ENCODE measurements at regions of chr1 and their contacts with region 1.

Region 1: GRCh38 chr1:211469938-211470529 is 21.9 kb downstream of the RD3 start:
- DNase-seq: peak; percentile 83
- ATAC-seq: peak; percentile 98 to 100
- H3K4me3 ChIP-seq: no peak overlapping the region
- H3K27ac ChIP-seq: 0 out of 6 replicates have a peak overlapping the region, but pooled peaks of 1 of the 2 experiments have one; percentile 4
- H3K4me1 ChIP-seq: 0 out of 3 replicates have a peak, but pooled peaks cover 7% of the 10 kb centered on the region
- CTCF ChIP-seq: peak; percentile 83
- EP300 ChIP-seq: no peak
- POLR2A ChIP-seq: no peak
- RAD21 ChIP-seq: peak; percentile 62 to 64

Region 2: GRCh38 chr1:211323156-211324063 is 146.6 kb before region 1 on chr1:
- CTCF ChIA-PET with region 1: interaction called, 12 read pairs
- POLR2A ChIA-PET with region 1: no interaction called
- DNase-seq: peak; percentile 66 to 72
- ATAC-seq: peak; percentile 80 to 87
- H3K4me3 ChIP-seq: no peak overlapping the region
- H3K27ac ChIP-seq: no peak overlapping the region
- H3K4me1 ChIP-seq: peaks cover 11% of the 10 kb centered on the region
- CTCF ChIP-seq: peak; percentile 92
- EP300 ChIP-seq: no peak
- POLR2A ChIP-seq: no peak
- RAD21 ChIP-seq: peak; percentile 82 to 90

Region 3: DNA sequence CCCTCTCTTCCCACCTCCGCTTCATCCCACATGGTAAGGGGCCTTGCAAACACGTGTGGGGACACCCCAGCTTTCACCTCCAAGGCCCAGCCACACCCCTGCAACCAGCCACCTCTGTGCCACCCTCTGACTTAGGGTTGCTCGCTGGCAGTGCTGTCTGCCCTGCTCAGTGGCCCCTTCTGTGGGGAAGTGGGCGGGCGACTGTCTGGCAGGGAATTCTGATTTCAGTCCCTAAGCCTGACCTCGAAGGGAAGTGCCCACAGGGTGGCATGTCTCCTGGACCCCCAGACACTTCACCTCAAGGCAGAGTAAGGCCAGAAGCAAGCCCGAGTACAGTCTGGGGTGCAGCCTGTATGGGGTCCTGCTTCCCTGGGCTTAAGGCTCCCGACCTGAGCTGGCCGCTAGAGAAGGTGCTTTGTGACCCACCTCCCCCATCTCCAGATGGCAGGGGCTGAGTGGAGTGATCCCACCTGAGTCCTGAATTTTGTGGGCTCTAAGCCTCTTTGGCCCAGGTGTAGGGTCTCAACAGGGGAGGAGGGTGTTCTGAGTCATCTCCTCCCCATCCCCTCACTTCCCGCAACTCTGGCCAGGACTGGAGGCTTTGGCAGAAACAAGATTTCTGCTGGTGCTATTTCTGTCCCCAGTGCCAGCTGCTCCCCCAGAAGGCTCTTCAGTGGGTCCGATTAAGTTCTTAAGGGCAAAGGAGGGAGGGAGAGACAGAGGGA is 14.9 kb after region 1 on chr1:
- CTCF ChIA-PET with region 1: interaction called, 63 read pairs
- POLR2A ChIA-PET with region 1: no interaction called
- DNase-seq: no peak
- ATAC-seq: peak in 1 of 2 experiments; percentile 21; a peak in 2 of 6 replicates
- H3K4me3 ChIP-seq: no peak overlapping the region
- H3K27ac ChIP-seq: no peak overlapping the region
- H3K4me1 ChIP-seq: no peaks in the 10 kb centered on the region
- CTCF ChIP-seq: no peak
- EP300 ChIP-seq: no peak
- POLR2A ChIP-seq: no peak
- RAD21 ChIP-seq: no peak

Region 4: DNA sequence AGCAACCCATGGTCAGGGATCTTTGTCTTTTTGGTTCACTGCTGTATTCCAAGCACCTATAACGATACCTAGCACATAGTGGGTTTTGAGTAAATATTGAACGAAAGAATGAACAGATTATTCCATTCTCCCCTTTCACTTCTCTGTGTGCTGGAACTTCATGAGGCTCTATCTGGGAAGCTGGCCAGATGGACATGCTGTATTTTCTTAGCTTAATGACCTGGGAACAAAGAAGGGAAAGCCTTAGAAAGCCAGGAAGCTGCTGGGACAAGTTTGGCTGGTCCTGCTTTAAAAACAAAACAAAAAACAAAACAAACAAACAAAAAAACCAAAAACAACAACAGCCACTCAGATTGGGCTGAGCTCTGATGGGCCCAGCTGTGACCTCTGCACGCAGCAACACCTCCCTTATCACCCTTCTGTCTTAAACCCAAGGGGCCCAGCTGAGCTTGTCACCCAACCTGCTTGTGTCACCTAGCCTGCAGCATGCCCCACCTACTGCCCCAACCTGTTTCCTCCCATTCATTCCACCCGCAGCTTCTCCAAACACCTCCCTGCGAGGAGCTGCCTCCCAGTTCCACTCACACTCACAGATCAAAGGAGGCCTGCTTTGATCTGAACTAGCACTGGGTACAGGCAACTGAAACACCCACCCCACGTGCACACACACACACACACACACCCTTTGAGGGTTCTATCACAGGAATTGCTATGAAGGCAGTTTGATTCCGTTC is 71.9 kb after region 1 on chr1:
- CTCF ChIA-PET with region 1: interaction called, 10 read pairs
- POLR2A ChIA-PET with region 1: no interaction called
- DNase-seq: no peak
- ATAC-seq: no peak
- H3K4me3 ChIP-seq: no peak overlapping the region
- H3K27ac ChIP-seq: no peak overlapping the region
- H3K4me1 ChIP-seq: no peaks in the 10 kb centered on the region
- CTCF ChIP-seq: no peak
- EP300 ChIP-seq: no peak
- POLR2A ChIP-seq: no peak
- RAD21 ChIP-seq: no peak

Region 5: DNA sequence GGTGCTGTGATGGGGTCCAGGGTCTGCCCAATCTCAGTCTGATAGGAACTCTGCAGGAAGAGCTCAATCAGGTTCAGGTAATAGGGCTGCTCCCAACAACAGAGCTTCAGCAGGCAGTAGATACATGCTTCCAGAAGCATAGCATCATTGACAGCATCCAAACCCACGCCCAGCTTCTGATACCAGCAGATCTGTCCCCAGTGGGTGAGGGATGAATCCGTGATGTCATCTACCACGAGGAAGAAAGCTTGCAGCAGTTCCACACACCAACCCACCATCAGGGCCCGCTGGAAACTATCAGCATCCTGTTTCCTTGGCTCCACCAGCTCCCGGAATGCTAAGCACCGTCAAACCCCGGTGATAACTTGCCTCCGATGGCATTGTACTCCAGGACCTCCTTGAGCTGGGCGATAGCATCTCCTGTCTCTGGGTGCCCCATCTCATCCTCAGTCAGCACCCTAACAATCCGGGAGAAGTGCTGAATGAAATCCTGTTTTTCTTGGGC is 190.7 kb after region 1 on chr1:
- CTCF ChIA-PET with region 1: interaction called, 31 read pairs
- POLR2A ChIA-PET with region 1: no interaction called
- DNase-seq: no peak
- ATAC-seq: no peak
- H3K4me3 ChIP-seq: no peak overlapping the region
- H3K27ac ChIP-seq: no peak overlapping the region
- H3K4me1 ChIP-seq: no peaks in the 10 kb centered on the region; the same call in 2 of the 3 replicates
- CTCF ChIP-seq: no peak
- EP300 ChIP-seq: no peak
- POLR2A ChIP-seq: no peak
- RAD21 ChIP-seq: no peak

Measured in A549 (cell line).